Caco-2 (cell line): ENCODE measurements at regions of chr4 and their contacts with region 1.

Region 1: GRCh38 chr4:107094332-107094731 is 58.2 kb upstream of the DKK2 start:
- DNase-seq: no peak
- H3K4me3 ChIP-seq: no peak overlapping the region
- H3K4me3 Mint-ChIP-seq: no peak overlapping the region
- H3K27ac Mint-ChIP-seq: no peak overlapping the region
- H3K4me1 ChIP-seq: no peaks in the 10 kb centered on the region
- H3K4me1 Mint-ChIP-seq: no peaks in the 10 kb centered on the region
- H3K27me3 ChIP-seq: no peaks in the 10 kb centered on the region
- H3K27me3 Mint-ChIP-seq: no peaks in the 10 kb centered on the region
- CTCF ChIP-seq: peak in 1 of 2 experiments; percentile 31

Region 2: DNA sequence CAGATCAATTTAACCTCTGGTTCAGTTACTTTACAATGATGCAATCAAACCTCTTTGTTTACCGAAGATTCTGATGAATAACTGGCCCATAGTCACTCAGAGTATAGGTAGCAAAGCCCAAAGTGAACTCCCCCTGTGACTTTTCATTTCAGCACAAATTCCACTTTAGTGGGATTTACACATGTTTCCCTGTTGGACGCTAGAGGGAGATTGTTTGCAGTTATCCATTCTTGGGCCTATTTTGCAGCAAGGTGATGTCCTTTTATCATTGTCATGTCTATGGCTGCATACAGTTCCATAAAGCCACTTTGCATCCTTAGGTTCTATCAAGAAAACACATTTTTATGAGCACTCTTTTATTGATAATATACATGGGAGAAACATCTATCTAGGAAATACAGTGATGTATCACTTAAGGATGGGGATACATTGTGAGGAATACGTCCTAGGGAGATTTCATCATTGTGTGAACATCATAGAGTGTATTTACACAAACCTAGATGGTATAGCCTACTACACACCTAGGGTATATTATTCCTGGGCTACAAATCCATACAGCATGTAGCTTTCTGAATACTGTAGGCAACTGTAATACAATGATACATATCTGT is 43.7 kb before region 1 on chr4:
- CTCF ChIA-PET with region 1: no interaction called
- POLR2A ChIA-PET with region 1: no interaction called
- intact Hi-C with region 1: no loop called
- DNase-seq: peak in 1 of 2 experiments; percentile 11
- H3K4me3 ChIP-seq: no peak overlapping the region
- H3K4me3 Mint-ChIP-seq: no peak overlapping the region
- H3K27ac Mint-ChIP-seq: no peak overlapping the region
- H3K4me1 ChIP-seq: no peaks in the 10 kb centered on the region
- H3K4me1 Mint-ChIP-seq: no peaks in the 10 kb centered on the region
- H3K27me3 ChIP-seq: no peaks in the 10 kb centered on the region
- H3K27me3 Mint-ChIP-seq: no peaks in the 10 kb centered on the region
- CTCF ChIP-seq: peak; percentile 41 to 63

Region 3: DNA sequence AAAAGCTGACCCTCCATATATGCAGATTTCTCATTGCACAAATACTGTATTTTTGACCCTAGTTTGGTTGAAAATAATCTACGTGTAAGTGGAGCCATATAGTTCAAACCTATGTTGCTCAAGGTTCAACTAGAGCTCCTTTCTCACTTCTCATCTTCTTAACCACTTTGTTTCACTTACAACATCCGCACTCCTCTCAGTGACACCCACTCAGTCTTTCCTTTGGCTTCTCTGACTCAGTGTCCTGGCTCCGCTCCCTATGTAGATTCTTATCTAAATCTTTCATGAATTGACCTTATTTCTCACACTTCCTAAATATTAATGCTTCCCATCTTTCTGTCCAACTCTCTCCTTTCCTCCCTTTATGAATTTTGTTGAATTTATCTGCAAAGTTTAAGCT is 25.3 kb before region 1 on chr4:
- CTCF ChIA-PET with region 1: no interaction called
- POLR2A ChIA-PET with region 1: no interaction called
- intact Hi-C with region 1: no loop called
- DNase-seq: no peak
- H3K4me3 ChIP-seq: no peak overlapping the region
- H3K4me3 Mint-ChIP-seq: no peak overlapping the region
- H3K27ac Mint-ChIP-seq: no peak overlapping the region
- H3K4me1 ChIP-seq: no peaks in the 10 kb centered on the region
- H3K4me1 Mint-ChIP-seq: no peaks in the 10 kb centered on the region
- H3K27me3 ChIP-seq: no peaks in the 10 kb centered on the region
- H3K27me3 Mint-ChIP-seq: no peaks in the 10 kb centered on the region
- CTCF ChIP-seq: no peak

Region 4: DNA sequence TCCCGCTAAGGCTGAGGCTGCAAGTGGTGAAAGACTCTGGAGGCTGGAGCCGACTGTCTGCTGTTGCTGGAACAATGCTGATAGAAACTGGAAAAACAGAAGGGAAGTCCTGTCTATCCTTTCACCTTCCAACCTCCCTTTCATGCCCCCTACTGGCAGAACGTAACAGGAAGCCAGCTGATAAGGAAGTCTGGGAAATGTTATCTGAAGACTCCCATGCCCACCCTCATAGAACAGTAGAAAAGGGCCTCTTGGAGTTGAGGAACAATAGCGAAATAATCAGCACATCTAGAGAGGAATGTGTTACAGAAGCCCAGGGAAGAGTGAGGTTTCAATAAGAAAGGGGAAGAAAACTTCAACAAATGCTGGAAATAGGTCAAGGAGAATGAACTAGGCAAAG is 58.9 kb after region 1 on chr4:
- CTCF ChIA-PET with region 1: no interaction called
- POLR2A ChIA-PET with region 1: no interaction called
- intact Hi-C with region 1: loop called (anchors 1 kb)
- DNase-seq: peak; percentile 41 to 50
- H3K4me3 ChIP-seq: no peak overlapping the region
- H3K4me3 Mint-ChIP-seq: no peak overlapping the region
- H3K27ac Mint-ChIP-seq: no peak overlapping the region
- H3K4me1 ChIP-seq: no peaks in the 10 kb centered on the region
- H3K4me1 Mint-ChIP-seq: no peaks in the 10 kb centered on the region
- H3K27me3 ChIP-seq: no peaks in the 10 kb centered on the region
- H3K27me3 Mint-ChIP-seq: no peaks in the 10 kb centered on the region
- CTCF ChIP-seq: peak in 1 of 2 experiments; percentile 35

Region 5: DNA sequence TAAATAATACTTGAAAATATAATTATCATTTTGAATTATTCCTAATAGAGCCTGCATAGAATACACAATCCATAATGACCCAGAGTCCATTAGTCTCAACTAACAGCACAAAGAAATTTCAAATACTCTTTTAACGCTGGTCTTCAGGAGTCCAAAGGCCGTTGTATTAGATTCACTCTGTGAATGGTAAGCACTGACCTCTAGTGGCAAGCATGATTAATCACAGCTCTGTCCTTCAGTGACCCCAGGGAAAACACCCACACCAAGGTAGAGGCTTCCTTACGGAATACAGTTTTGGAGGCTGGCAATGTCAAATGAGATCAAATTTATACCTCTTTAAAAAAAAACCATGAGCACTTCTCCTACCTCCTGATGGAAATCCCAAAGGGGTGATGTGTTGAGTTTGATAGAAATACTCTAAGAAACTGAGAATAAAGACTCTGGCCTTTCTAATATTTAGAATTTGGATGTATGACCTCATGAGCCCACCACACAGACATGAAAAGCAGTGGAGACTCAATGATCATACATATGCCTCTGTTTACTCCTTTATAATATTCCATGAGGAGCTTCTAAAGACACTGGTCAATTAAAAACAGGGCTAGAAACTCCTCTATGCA is 88.9 kb after region 1 on chr4:
- CTCF ChIA-PET with region 1: interaction called, 10 read pairs
- POLR2A ChIA-PET with region 1: no interaction called
- intact Hi-C with region 1: loop called (anchors 1 kb)
- DNase-seq: peak; percentile 42 to 57
- H3K4me3 ChIP-seq: no peak overlapping the region
- H3K4me3 Mint-ChIP-seq: no peak overlapping the region
- H3K27ac Mint-ChIP-seq: no peak overlapping the region
- H3K4me1 ChIP-seq: no peaks in the 10 kb centered on the region; the same call in 1 of the 2 replicates
- H3K4me1 Mint-ChIP-seq: no peaks in the 10 kb centered on the region
- H3K27me3 ChIP-seq: no peaks in the 10 kb centered on the region
- H3K27me3 Mint-ChIP-seq: no peaks in the 10 kb centered on the region
- CTCF ChIP-seq: peak; percentile 66 to 71

Region 6: DNA sequence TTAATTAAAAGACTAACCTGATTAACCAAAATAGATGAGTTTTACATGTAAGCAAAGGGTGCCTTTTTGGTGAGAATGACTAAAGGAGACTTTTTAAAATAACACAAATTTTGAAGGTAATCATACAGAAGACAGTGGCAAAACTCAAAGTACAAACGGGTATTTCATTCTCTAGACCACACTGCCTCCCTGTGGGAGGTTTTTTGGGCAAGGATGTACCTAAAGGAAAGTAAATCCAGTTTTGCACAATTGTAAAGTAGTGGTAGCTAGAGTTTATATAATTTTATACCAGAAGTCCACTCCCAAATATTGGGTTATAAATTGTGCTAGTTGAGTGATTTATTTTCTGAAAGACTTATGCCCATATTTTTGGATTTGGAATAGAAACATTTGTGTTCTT is 424.7 kb after region 1 on chr4:
- CTCF ChIA-PET with region 1: no interaction called
- POLR2A ChIA-PET with region 1: no interaction called
- intact Hi-C with region 1: loop called (anchors 1 kb)
- DNase-seq: peak in 1 of 2 experiments; percentile 29
- H3K4me3 ChIP-seq: no peak overlapping the region
- H3K4me3 Mint-ChIP-seq: no peak overlapping the region
- H3K27ac Mint-ChIP-seq: no peak overlapping the region
- H3K4me1 ChIP-seq: no peaks in the 10 kb centered on the region
- H3K4me1 Mint-ChIP-seq: no peaks in the 10 kb centered on the region
- H3K27me3 ChIP-seq: no peaks in the 10 kb centered on the region
- H3K27me3 Mint-ChIP-seq: no peaks in the 10 kb centered on the region
- CTCF ChIP-seq: peak; percentile 35 to 56

Region 7: GRCh38 chr4:107666134-107666533 is 571.8 kb after region 1 on chr4:
- CTCF ChIA-PET with region 1: no interaction called
- POLR2A ChIA-PET with region 1: no interaction called
- intact Hi-C with region 1: loop called (anchors 2 kb)
- DNase-seq: no peak
- H3K4me3 ChIP-seq: no peak overlapping the region
- H3K4me3 Mint-ChIP-seq: no peak overlapping the region
- H3K27ac Mint-ChIP-seq: no peak overlapping the region
- H3K4me1 ChIP-seq: no peaks in the 10 kb centered on the region
- H3K4me1 Mint-ChIP-seq: no peaks in the 10 kb centered on the region
- H3K27me3 ChIP-seq: no peaks in the 10 kb centered on the region
- H3K27me3 Mint-ChIP-seq: no peaks in the 10 kb centered on the region
- CTCF ChIP-seq: peak in 1 of 2 experiments; percentile 7